K562 (cell line): ENCODE measurements at regions of chr9 and their contacts with region 1.

Region 1: DNA sequence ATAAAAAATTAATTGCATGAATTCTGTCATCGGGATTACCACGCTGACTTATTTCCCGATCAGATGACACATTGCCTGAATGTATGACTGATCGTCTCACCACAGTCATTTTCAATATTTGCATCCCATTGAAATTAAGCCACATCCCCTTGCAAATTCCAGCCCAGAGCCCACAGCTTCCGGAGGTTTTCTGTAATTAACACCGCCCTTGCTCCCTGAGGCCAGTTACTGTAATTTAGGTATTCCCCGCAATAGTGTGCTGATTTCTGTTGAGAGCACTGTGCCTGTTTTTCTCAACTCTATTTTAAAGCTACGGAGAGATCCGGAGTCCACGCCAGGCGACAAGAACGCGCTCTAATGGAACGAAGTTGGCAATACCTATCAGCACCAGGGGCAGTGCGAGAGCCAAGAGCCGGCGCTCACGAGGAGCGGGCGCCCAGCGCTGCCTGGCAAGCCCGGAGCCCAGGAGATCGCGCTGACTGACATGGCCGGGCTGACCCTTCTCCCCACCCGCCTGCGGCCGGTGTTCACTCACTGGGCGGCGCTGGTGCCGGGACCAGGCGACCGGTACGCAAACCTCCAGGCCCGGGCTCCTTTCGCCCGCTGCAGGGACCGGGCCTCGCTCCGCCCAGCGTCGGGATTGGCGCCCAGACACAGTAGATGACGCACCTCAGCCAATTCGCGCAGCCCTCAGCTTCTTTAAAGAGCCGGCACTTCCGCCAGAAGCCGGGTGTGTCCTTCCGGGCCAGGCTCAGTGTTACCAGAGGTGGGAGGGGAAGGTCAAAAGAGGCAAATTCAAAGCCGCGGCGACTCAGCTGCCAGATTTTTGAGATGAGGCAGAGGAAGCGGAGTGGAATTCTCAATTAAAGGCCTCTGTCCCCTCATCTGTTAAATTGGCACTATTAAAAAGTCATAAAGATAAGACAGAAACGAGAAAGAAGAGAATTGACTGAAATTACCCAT is at the start of gene PLGRKT:
- DNase-seq: peak; percentile 39 to 82 (median 50)
- ATAC-seq: peak; percentile 99
- H3K4me3 ChIP-seq: peak within 1 kb of the TSS; percentile 47
- H3K27ac ChIP-seq: peak within 1 kb of the TSS; percentile 69
- H3K4me1 ChIP-seq: peaks cover 4 to 6% of the 10 kb centered on the region in 2 experiments; a peak in 2 of 5 replicates
- H3K27me3 ChIP-seq: no peaks in the 10 kb centered on the region
- CTCF ChIP-seq: 0 out of 6 replicates have a peak, but pooled peaks of 1 of the 3 experiments have one; percentile 6
- EP300 ChIP-seq: no peak
- POLR2A ChIP-seq: peak; percentile 72
- RAD21 ChIP-seq: no peak
- polyA plus RNA-seq, gene PLGRKT: 11.2 to 13.8 TPM

Region 2: DNA sequence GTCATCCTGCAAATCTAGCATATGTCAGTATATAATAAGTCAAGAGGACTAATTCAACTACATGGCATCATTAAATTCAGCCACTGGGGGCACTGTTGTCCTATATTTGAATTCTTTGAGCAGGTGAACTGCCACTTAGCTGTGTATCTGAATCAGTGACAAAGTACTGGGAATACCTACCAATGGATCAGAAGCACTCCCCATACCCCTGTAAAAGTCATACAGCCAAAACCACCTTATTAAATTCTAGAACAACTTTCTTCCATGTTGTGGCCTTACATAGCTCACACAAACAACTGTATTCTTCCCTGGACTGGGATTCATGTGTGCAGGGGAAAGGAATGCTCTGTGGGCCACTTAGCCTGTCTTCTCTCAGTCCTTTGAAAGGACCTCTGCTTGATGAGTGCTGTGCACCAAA is 832.8 kb before region 1 on chr9:
- CTCF ChIA-PET with region 1: no interaction called
- POLR2A ChIA-PET with region 1: no interaction called
- in situ Hi-C with region 1: loop called (anchors 25 kb)
- intact Hi-C with region 1: no loop called
- DNase-seq: peak; percentile 27 to 72 (median 40)
- ATAC-seq: peak; percentile 93
- H3K4me3 ChIP-seq: no peak overlapping the region
- H3K27ac ChIP-seq: no peak overlapping the region
- H3K4me1 ChIP-seq: peaks cover 0 to 3% of the 10 kb centered on the region in 2 experiments; a peak in 1 of 5 replicates
- H3K27me3 ChIP-seq: peaks cover 3 to 4% of the 10 kb centered on the region in 2 experiments; a peak in 3 of 5 replicates
- CTCF ChIP-seq: peak; percentile 31 to 64 (median 58); a peak in 5 of 6 replicates
- EP300 ChIP-seq: no peak
- POLR2A ChIP-seq: no peak
- RAD21 ChIP-seq: peak; percentile 9 to 55; a peak in 2 of 4 replicates

Region 3: GRCh38 chr9:4740638-4741364 is 696.7 kb before region 1 on chr9 and contains the start of gene AK3:
- CTCF ChIA-PET with region 1: no interaction called
- POLR2A ChIA-PET with region 1: no interaction called
- in situ Hi-C with region 1: loop called (anchors 25 kb)
- intact Hi-C with region 1: no loop called
- DNase-seq: peak; percentile 85 to 92 (median 88)
- ATAC-seq: peak; percentile 93
- H3K4me3 ChIP-seq: peak within 1 kb of the TSS; percentile 89
- H3K27ac ChIP-seq: peak within 1 kb of the TSS; percentile 85
- H3K4me1 ChIP-seq: peaks cover 9 to 23% of the 10 kb centered on the region in 2 experiments; a peak in 4 of 5 replicates
- H3K27me3 ChIP-seq: no peaks in the 10 kb centered on the region
- CTCF ChIP-seq: peak in 2 of 3 experiments; percentile 44 to 69; a peak in 4 of 6 replicates
- EP300 ChIP-seq: no peak
- POLR2A ChIP-seq: peak; percentile 76
- RAD21 ChIP-seq: peak; percentile 29 to 41
- polyA plus RNA-seq, gene AK3: 12.2 to 16.0 TPM

Region 4: GRCh38 chr9:5186416-5187169 is 250.9 kb before region 1 on chr9:
- CTCF ChIA-PET with region 1: interaction called, 6 read pairs
- POLR2A ChIA-PET with region 1: no interaction called
- in situ Hi-C with region 1: no loop called
- intact Hi-C with region 1: loop called (anchors 5 kb)
- DNase-seq: peak; percentile 35 to 47 (median 41)
- ATAC-seq: peak; percentile 83
- H3K4me3 ChIP-seq: no peak overlapping the region
- H3K27ac ChIP-seq: no peak overlapping the region
- H3K4me1 ChIP-seq: peaks cover 0 to 5% of the 10 kb centered on the region in 2 experiments; a peak in 2 of 5 replicates
- H3K27me3 ChIP-seq: no peaks in the 10 kb centered on the region
- CTCF ChIP-seq: peak; percentile 54 to 65 (median 65)
- EP300 ChIP-seq: no peak
- POLR2A ChIP-seq: no peak
- RAD21 ChIP-seq: peak; percentile 60 to 70

Region 5: GRCh38 chr9:5593904-5594303 is 156.4 kb after region 1 on chr9:
- CTCF ChIA-PET with region 1: no interaction called
- POLR2A ChIA-PET with region 1: no interaction called
- in situ Hi-C with region 1: loop called (anchors 5 kb)
- intact Hi-C with region 1: no loop called
- DNase-seq: no peak
- ATAC-seq: no peak
- H3K4me3 ChIP-seq: no peak overlapping the region
- H3K27ac ChIP-seq: no peak overlapping the region
- H3K4me1 ChIP-seq: no peaks in the 10 kb centered on the region
- H3K27me3 ChIP-seq: no peaks in the 10 kb centered on the region
- CTCF ChIP-seq: no peak
- EP300 ChIP-seq: no peak
- POLR2A ChIP-seq: no peak
- RAD21 ChIP-seq: no peak